ENCODE measurements at regions of chr3 and their contacts with region 1.

Region 1: GRCh38 chr3:121545574-121546455 is at the start of gene POLQ:
- DNase-seq: peak; percentile 92
- H3K4me3 ChIP-seq: peak within 1 kb of the TSS; percentile 29 to 61 (median 54)
- H3K27ac ChIP-seq: peak within 1 kb of the TSS; percentile 76 to 84 (median 78)
- H3K4me1 ChIP-seq: peaks cover 0 to 11% (median 9%) of the 10 kb centered on the region in 4 donors
- H3K27me3 ChIP-seq: no peaks in the 10 kb centered on the region
- CTCF ChIP-seq: no peak
- EP300 ChIP-seq: peak in 1 of 4 donors; percentile 1
- POLR2A ChIP-seq: no peak
- total RNA-seq, gene POLQ: 0.16 to 0.71 (median 0.48) TPM

Region 2: GRCh38 chr3:121654493-121655385 is 108.9 kb after region 1 on chr3:
- intact Hi-C with region 1: loop called (anchors 5 kb)
- DNase-seq: no peak
- H3K4me3 ChIP-seq: no peak overlapping the region
- H3K27ac ChIP-seq: no peak overlapping the region
- H3K4me1 ChIP-seq: no peaks in the 10 kb centered on the region
- H3K27me3 ChIP-seq: no peaks in the 10 kb centered on the region
- CTCF ChIP-seq: no peak
- EP300 ChIP-seq: no peak
- POLR2A ChIP-seq: no peak

Region 3: DNA sequence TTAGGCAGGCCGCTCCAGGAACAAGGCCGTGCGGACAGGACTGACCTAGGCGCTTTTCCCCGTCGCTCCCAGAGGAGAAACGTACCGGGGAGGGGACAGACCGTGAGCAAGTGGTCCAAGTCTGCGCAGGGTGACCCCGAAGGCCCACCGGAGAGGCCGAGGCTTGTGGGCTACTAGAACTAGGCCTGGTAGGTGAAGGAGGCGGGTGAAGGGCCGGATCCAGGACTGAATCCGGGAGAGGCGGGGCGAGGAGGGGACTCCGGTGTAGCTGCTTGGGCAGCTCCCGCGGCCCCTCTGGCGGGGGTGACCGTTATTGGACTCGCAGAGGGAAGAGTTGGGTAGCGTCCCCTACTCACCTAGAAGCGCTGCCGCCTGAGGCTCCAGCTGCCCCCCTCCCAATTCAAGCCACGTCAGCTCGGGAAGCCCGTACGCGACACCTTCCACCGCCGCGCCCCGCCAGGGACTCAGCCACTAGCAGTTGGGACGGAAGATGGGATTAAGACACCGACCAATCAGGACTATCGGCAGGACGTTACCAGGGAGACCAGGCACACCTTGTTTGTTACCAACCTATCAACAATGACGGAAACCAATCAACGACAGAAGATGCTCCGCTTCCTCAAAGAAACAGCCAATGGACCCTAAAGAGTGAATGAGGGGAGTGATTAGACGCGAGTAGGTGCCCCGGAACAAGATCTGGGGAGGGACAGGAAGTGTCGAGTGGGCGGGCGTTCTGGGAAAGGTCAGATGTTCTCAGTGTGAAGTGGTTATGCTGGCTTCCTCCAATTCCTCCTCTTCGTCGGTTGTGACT is 203.7 kb after region 1 on chr3 and contains the start of gene GOLGB1:
- intact Hi-C with region 1: loop called (anchors 5 kb)
- DNase-seq: peak; percentile 98
- H3K4me3 ChIP-seq: peak within 1 kb of the TSS; percentile 68 to 92 (median 74)
- H3K27ac ChIP-seq: peak within 1 kb of the TSS; percentile 85 to 91 (median 87)
- H3K4me1 ChIP-seq: peaks cover 0 to 31% (median 22%) of the 10 kb centered on the region in 4 donors
- H3K27me3 ChIP-seq: no peaks in the 10 kb centered on the region
- CTCF ChIP-seq: no peak
- EP300 ChIP-seq: no peak
- POLR2A ChIP-seq: peak; percentile 97 to 98
- total RNA-seq, gene GOLGB1: 44.8 to 70.1 (median 54.5) TPM

Region 4: DNA sequence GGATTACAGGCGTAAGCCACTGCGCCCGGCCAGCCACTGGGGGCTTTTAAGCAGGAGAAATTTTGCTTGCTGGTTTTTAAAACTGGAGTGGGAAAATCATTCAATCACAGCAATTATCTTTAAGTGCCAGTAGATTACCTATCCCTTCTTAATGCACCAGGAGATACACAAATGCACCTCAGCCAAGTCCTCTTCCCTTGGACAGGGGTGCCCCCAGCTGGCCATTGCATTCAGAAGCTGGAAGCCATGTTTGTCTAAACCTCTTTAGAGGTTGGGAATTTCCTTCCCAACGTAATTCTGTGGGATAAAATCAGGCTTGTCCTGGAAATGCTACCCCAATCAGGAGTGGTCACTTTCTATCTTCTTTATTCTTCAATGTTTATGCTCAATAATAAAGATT is 810.6 kb after region 1 on chr3:
- intact Hi-C with region 1: loop called (anchors 10 kb)
- DNase-seq: no peak
- H3K4me3 ChIP-seq: no peak overlapping the region
- H3K27ac ChIP-seq: no peak overlapping the region
- H3K4me1 ChIP-seq: no peaks in the 10 kb centered on the region
- H3K27me3 ChIP-seq: no peaks in the 10 kb centered on the region
- CTCF ChIP-seq: peak in 2 of 4 experiments; percentile 28 to 34
- EP300 ChIP-seq: no peak
- POLR2A ChIP-seq: no peak

Region 5: GRCh38 chr3:122383771-122384697 is 838.2 kb after region 1 on chr3 and contains the start of gene FAM162A:
- intact Hi-C with region 1: loop called (anchors 10 kb)
- DNase-seq: peak; percentile 94
- H3K4me3 ChIP-seq: peak within 1 kb of the TSS; percentile 56 to 76 (median 72)
- H3K27ac ChIP-seq: peak within 1 kb of the TSS; percentile 90 to 93 (median 92)
- H3K4me1 ChIP-seq: peaks cover 0 to 31% (median 26%) of the 10 kb centered on the region in 4 donors
- H3K27me3 ChIP-seq: no peaks in the 10 kb centered on the region
- CTCF ChIP-seq: peak; percentile 20 to 37 (median 27)
- EP300 ChIP-seq: no peak
- POLR2A ChIP-seq: peak; percentile 77 to 86
- total RNA-seq, gene FAM162A: 37.1 to 56.6 (median 45.6) TPM